Ovary (tissue), 10 donors: ENCODE measurements at regions of chr7 and their contacts with region 1.

Region 1: GRCh38 chr7:2680792-2681490 is 7.1 kb upstream of the AMZ1 start:
- DNase-seq: peak; percentile 62 to 83 (median 80)
- H3K4me3 ChIP-seq: no peak overlapping the region
- H3K27ac ChIP-seq: no peak overlapping the region
- H3K4me1 ChIP-seq: no peaks in the 10 kb centered on the region
- H3K27me3 ChIP-seq: no peaks in the 10 kb centered on the region
- CTCF ChIP-seq: peak; percentile 47 to 61 (median 57)
- EP300 ChIP-seq: no peak
- POLR2A ChIP-seq: no peak

Region 2: GRCh38 chr7:2451171-2452073 is 229.5 kb before region 1 on chr7:
- intact Hi-C with region 1: loop called in 2 of 4 experiments (anchors 10 kb)
- DNase-seq: peak; percentile 70 to 89 (median 86)
- H3K4me3 ChIP-seq: peak overlapping the region; percentile 12
- H3K27ac ChIP-seq: no peak overlapping the region
- H3K4me1 ChIP-seq: peaks cover 4% of the 10 kb centered on the region
- H3K27me3 ChIP-seq: no peaks in the 10 kb centered on the region
- CTCF ChIP-seq: peak; percentile 72 to 87 (median 73)
- EP300 ChIP-seq: no peak
- POLR2A ChIP-seq: no peak

Region 3: DNA sequence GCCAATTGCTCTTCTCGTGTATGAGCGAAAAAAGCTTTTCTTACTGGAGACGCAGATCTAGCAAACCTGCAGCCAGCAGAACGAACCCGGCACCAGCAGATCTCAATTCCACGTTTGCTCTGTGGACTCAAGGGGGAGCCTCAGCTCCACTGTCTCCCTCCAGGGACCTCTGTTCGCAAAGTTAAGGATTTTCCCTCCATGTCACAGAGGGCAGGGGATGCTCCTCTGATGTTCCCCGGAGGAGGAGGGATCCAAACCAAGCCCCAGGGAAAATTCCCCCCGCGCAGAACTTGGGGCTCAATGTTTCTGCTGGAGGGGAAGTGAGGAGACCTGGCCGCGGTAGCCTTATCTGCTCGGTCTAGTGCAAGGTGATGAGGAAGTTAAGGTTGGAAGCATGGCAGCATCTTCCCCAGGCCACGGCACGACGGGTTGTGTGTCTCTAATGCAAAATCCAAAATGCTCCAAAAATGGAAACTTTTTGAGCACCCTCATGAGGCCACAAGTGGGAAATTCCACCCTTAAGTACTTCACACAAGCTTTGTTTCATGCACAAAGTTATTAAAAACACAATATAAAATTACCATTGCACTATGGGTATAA is 113.2 kb before region 1 on chr7:
- intact Hi-C with region 1: loop called in 1 of 4 experiments (anchors 5 kb)
- DNase-seq: peak; percentile 35 to 62 (median 52)
- H3K4me3 ChIP-seq: no peak overlapping the region
- H3K27ac ChIP-seq: no peak overlapping the region
- H3K4me1 ChIP-seq: no peaks in the 10 kb centered on the region
- H3K27me3 ChIP-seq: no peaks in the 10 kb centered on the region
- CTCF ChIP-seq: peak in 2 of 3 donors; percentile 18 to 36
- EP300 ChIP-seq: no peak
- POLR2A ChIP-seq: no peak

Region 4: GRCh38 chr7:2698581-2699288 is 17.8 kb after region 1 on chr7:
- intact Hi-C with region 1: no loop called
- DNase-seq: no peak
- H3K4me3 ChIP-seq: no peak overlapping the region
- H3K27ac ChIP-seq: no peak overlapping the region
- H3K4me1 ChIP-seq: no peaks in the 10 kb centered on the region
- H3K27me3 ChIP-seq: no peaks in the 10 kb centered on the region
- CTCF ChIP-seq: no peak
- EP300 ChIP-seq: no peak
- POLR2A ChIP-seq: no peak